Activated CD4-positive, alpha-beta T cell treated with anti-CD3 and anti-CD28 coated beads, Interleukin-2, amount 10 ng/mL, durations not matched to agents 24 days and 14 days (primary cell): ENCODE measurements at regions of chr18 and their contacts with region 1.

Region 1: DNA sequence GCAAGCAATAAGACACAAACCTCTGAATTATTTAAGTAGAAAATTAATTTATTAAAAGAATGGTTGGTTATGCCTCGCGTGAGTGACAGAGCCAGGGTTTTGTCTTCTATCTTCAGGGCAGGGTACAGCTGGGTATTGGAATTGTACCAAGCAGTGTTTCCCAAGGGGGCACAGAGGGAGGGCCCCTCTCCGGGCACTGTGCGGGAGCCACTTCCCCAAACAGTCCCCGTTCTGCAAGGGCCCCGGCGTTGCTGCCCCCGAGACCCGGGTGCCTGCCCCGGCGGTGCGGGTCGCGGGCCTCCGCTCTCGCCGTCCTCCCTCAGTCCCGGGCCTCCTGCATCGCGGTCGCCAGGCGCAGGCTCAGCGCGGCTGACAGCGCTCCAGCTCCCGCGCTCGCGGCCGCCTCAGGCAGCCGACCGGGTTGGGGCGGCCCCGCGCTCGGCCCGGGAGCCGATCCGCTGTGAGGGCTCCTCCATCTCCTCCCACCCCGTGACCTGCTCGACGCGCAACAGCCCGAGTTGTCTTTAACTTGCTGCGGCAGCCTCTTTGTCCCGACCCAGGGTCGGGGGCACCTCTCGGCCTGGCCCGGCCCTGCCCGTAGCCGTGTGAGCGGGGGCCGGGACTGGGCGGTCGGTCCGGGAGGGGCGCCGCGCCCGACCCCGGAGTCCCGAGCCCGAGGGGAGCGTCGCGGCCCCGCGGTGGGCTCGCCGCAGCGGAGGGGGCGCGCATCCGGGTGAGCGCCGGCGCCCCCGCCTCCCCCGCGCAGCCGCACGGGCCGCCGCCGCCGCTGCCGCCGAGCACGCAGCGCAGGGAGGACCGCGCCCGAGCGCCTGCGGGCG is 620 bp upstream of the GALNT1 start:
- DNase-seq: peak; percentile 86
- H3K4me3 Mint-ChIP-seq: peak overlapping the region; percentile 73
- H3K27ac Mint-ChIP-seq: peak overlapping the region; percentile 66
- H3K4me1 Mint-ChIP-seq: peaks cover 22% of the 10 kb centered on the region
- H3K27me3 Mint-ChIP-seq: peaks cover 12% of the 10 kb centered on the region

Region 2: DNA sequence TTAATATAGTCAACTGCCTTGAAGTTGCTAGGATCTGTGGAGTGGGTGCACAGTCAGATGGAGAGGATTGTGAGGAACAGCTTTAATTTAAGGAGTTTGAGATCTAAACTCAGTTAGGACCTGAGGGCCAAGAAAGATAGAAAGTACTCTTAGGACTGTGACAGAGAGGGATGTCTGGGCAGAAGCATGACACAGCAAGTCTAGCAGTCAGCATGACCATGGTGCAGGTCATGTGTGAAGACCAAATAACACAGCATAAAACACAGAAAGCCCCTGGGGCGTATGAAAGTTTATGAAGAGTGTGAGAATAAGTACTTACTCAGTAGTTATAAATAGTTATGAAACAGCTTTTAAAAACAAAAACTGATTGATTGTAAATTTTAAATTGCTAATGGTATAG is 107.8 kb after region 1 on chr18:
- intact Hi-C with region 1: loop called (anchors 10 kb)
- DNase-seq: no peak
- H3K4me3 Mint-ChIP-seq: no peak overlapping the region
- H3K27ac Mint-ChIP-seq: no peak overlapping the region
- H3K4me1 Mint-ChIP-seq: peaks cover 2% of the 10 kb centered on the region
- H3K27me3 Mint-ChIP-seq: no peaks in the 10 kb centered on the region